ENCODE measurements at regions of chr22 and their contacts with region 1.

Region 1: DNA sequence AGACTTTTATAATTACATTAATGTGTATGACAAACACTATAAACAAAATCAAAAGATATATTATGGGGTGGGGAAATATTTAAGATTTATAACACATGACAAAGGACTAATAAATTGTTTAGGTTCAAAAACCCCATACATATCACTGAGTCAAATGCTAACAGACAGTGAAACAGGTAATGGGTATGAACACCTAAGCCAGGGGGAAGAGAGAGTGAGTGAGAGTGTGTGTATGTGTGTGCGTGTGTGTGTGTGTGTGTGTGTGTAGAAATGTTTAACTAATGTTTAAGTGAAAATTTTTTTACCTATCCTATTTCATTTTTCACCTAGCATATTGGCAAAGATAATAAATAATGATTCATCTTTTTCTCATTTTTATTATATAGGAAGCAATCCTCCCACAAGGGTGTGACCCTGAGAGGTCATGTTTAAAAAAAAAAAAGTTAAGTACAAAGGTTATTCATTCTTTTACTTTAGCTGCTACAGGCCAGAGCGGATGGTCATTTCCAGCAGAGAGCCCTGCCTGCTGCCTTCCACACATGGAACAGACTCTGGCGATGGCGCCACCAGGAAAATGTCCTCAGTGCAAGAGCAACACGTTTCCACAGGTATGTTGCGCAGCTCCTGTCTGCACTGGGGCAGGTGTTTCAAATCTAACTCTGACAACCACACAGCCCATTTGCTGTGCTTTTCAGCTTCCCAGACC is 72.9 kb downstream of the PISD start:
- DNase-seq: no peak
- ATAC-seq: no peak

Region 2: DNA sequence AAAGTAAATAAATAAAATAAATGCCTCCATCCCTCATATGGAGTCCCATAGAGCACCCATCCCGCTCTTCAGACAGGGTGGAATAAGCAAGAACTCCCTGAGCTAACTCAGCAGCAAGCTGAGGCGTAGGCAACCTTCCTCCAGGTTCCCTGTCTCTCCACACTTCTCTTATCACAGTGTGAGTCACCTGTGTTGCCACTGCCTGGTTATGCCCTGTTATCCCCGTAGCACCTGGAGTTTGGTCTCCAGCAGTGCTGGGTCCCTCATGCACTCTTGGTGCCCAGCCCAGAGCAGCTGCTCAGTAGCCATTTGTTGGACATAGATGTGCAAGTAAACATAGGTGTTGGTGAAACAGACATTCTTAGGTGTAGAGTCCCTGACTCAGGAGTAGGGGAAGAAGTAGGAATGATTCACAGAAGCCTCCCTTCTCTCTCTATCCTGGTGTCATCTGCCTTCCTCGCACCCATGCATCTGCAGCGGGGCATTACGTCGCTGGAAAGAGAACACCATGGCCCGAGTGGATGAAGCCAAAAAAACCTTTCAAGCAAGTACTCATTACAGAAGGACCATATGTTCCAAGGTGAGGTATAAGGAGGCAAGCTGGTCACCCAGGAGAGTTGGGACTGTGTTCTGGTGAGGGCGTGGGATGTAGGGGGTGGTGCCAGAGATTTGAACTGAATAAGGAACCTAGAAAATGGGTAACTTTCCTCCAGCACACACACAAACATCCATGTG is 16.9 kb after region 1 on chr22:
- intact Hi-C with region 1: loop called (anchors 2 kb)
- DNase-seq: peak; percentile 32
- ATAC-seq: no peak

Region 3: DNA sequence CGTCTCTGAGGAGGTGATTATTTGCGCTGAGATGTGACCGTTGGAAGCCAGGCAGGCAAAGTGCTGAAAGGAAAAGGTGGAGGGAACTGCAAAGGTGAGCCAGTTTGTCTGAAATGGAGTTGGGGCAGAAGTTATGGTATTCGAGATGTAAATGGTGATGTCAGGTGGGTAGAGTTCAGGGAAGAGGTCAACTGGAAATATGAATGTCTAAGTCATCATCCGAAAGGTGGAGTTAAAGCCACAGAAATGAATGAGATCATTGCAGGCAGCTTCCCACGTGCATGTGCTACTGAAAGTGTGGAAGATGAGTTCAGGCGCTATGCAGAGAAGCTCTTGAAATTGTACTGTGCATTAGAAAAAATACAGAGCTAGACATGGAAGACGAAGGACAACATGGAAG is 877.4 kb after region 1 on chr22:
- intact Hi-C with region 1: no loop called
- DNase-seq: no peak
- ATAC-seq: no peak